ENCODE measurements at regions of chr15 and their contacts with region 1.

Region 1: GRCh38 chr15:41640985-41641384 is 19.2 kb upstream of the MGA start:
- DNase-seq: no peak
- H3K4me3 ChIP-seq: no peak overlapping the region
- H3K27ac ChIP-seq: no peak overlapping the region
- H3K4me1 ChIP-seq: no peaks in the 10 kb centered on the region
- H3K27me3 ChIP-seq: no peaks in the 10 kb centered on the region
- CTCF ChIP-seq: no peak
- EP300 ChIP-seq: no peak
- POLR2A ChIP-seq: no peak

Region 2: DNA sequence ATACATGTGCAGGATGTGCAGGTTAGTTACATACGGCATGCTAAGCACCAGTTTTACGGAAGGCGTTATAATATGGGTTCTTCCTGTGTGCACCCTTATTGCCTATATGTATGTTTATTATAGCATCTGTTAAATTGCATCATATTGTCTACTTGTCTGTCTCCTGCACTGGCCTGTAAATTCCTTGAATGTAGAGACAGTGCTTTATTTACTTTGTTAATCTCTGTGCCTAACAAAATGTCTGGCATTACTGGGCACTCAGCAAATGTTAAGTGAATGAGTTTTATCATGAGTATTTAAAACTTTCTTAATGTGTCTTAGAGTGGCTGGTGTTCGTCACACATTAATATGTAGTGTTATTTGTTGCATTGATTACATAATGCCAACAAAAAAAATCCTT is 43.0 kb after region 1 on chr15:
- intact Hi-C with region 1: loop called in 1 of 4 experiments (anchors 5 kb)
- DNase-seq: no peak
- H3K4me3 ChIP-seq: no peak overlapping the region
- H3K27ac ChIP-seq: no peak overlapping the region
- H3K4me1 ChIP-seq: peaks cover 3% of the 10 kb centered on the region
- H3K27me3 ChIP-seq: no peaks in the 10 kb centered on the region
- CTCF ChIP-seq: no peak
- EP300 ChIP-seq: no peak
- POLR2A ChIP-seq: no peak